ENCODE measurements at regions of chr9 and their contacts with region 1.

Region 1: GRCh38 chr9:72943844-72944462 is 8.9 kb downstream of the ALDH1A1 start:
- DNase-seq: no peak
- H3K4me3 ChIP-seq: no peak overlapping the region
- H3K27ac ChIP-seq: no peak overlapping the region
- H3K4me1 ChIP-seq: no peaks in the 10 kb centered on the region
- H3K27me3 ChIP-seq: no peaks in the 10 kb centered on the region
- CTCF ChIP-seq: no peak

Region 2: DNA sequence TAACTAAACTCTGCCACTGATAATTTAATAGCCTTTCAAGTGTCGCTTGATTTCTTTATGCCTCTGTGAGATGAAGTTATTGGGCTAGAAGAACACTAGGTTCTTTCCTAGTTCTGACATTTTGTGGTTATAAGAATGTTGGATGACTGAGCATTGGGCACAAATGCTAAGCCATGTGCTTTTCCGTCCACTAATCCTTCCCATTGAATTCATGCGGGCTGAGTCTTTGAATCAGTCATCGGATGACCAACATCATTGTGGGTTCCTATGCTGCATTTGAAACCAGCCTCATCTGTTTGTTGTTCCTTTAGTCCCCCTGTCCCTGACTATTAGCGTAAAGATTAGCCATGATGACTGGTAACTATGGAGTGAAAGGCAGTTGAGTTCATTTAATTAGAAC is 49.6 kb before region 1 on chr9:
- CTCF ChIA-PET with region 1: no interaction called
- POLR2A ChIA-PET with region 1: no interaction called
- intact Hi-C with region 1: loop called (anchors 5 kb)
- DNase-seq: no peak
- H3K4me3 ChIP-seq: no peak overlapping the region
- H3K27ac ChIP-seq: no peak overlapping the region
- H3K4me1 ChIP-seq: no peaks in the 10 kb centered on the region
- H3K27me3 ChIP-seq: no peaks in the 10 kb centered on the region
- CTCF ChIP-seq: no peak

Region 3: DNA sequence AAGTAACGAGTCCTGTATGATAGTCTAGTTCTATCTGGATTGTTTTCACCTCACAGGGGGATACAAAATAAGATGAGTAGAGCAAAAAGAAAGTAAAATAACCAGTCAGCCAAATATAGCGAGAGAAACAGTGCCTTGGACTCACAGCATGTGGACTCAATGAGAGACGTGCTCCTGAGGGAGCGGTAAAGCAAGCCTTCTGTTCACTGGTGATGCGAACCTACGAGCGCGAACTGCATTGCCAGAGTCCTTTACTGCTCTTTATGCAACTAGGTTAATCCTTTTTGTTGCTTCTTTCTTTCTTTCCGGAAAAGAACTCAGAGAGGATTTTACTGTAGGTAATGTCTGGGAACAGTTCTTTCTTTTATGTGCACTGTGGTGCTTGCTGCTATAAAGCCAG is 340.4 kb after region 1 on chr9:
- CTCF ChIA-PET with region 1: no interaction called
- POLR2A ChIA-PET with region 1: no interaction called
- intact Hi-C with region 1: no loop called
- DNase-seq: no peak
- H3K4me3 ChIP-seq: no peak overlapping the region
- H3K27ac ChIP-seq: no peak overlapping the region
- H3K4me1 ChIP-seq: no peaks in the 10 kb centered on the region
- H3K27me3 ChIP-seq: peaks cover 11% of the 10 kb centered on the region
- CTCF ChIP-seq: no peak